Dendritic cell treated with granulocyte-macrophage colony-stimulating factor and Interleukin-4, amounts not matched to agents 40 ng/mL and 50 ng/mL, for 4 days (primary cell): ENCODE measurements at regions of chr19 and their contacts with region 1.

Region 1: DNA sequence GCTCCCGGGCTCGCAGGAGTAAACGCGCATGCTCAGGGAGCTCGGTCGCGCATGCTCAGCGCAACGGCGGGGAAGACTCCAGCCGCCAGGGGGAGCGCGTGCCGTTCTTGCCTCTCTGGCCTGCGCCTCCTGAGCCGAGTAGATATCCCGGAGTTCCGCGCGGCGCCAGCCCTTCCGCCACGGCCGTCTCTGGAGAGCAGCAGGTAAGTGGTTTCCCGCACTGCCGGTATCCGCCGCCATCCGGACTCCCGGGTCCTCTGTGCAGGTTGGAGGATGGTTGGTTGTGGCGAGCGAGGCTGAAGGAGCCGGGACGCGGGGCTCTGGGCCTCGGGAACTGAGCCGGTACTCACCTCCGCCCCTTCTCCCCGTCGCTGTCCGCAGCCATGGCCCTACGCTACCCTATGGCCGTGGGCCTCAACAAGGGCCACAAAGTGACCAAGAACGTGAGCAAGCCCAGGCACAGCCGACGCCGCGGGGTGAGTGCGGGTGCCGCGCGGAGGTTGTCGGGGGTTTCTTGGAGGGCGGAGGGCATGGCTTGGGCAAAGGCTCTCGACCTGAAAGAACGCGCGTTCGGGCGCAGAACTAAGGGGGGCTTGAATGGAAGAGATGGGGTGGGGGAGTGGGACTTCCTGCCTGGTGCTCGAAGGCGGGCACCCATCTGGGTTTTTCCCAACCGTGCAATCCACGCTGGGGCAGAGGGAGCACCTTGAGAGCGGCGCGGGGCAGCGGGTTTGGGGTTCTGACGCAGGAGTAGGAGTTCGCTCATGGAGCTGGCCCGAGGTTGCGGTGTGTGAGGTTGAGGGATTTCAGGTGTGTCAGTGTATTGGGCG is at the start of gene RPL36:
- H3K4me3 Mint-ChIP-seq: peak within 1 kb of the TSS; percentile 96
- H3K27ac Mint-ChIP-seq: peak within 1 kb of the TSS; percentile 98
- H3K4me1 Mint-ChIP-seq: peaks cover 54% of the 10 kb centered on the region
- H3K27me3 Mint-ChIP-seq: no peaks in the 10 kb centered on the region

Region 2: DNA sequence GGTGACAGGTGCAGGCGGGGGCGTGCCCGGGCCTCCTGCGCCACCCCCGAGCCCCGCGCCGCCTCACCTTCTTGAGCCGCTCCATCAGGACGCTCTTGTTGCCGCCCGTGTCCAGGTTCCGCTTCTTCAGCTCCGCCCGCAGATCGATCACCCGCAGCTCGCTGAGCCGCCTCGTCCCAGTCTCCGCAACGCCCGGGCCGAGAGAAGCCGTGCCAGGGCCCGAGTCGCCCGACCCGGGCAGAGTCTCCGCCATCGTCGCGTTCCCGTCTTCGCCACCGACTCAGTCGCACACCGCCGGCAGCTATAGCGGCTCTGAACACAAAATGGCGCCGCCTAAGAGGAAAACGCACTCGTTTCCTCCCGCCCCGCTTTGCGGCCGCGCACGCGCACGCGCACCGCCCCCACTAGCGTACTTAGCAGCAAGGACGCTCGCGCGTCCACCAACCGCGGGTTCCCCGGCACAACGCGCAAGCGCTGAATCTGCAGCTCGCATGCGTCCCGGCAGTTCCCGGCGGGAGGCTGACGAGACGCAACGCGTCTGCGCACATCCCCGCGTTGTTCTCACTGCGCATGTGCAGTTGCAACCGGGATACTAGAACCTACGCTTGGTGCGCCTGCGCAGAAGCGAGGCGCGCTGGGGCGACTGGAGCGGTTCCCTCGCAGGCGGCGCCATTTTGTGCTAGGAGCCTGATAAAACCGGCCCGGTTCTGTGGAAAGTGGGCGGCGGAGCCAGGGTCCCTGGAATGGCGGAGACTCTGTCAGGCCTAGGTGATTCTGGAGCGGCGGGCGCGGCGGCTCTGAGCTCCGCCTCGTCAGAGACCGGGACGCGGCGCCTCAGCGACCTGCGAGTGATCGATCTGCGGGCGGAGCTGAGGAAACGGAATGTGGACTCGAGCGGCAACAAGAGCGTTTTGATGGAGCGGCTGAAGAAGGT is 67.6 kb before region 1 on chr19 and contains the starts of genes SAFB and SAFB2:
- intact Hi-C with region 1: loop called (anchors 2 kb)
- H3K4me3 Mint-ChIP-seq: peak within 1 kb of the TSS; percentile 100
- H3K27ac Mint-ChIP-seq: peak within 1 kb of the TSS; percentile 100
- H3K4me1 Mint-ChIP-seq: peaks cover 61% of the 10 kb centered on the region
- H3K27me3 Mint-ChIP-seq: no peaks in the 10 kb centered on the region

Region 3: DNA sequence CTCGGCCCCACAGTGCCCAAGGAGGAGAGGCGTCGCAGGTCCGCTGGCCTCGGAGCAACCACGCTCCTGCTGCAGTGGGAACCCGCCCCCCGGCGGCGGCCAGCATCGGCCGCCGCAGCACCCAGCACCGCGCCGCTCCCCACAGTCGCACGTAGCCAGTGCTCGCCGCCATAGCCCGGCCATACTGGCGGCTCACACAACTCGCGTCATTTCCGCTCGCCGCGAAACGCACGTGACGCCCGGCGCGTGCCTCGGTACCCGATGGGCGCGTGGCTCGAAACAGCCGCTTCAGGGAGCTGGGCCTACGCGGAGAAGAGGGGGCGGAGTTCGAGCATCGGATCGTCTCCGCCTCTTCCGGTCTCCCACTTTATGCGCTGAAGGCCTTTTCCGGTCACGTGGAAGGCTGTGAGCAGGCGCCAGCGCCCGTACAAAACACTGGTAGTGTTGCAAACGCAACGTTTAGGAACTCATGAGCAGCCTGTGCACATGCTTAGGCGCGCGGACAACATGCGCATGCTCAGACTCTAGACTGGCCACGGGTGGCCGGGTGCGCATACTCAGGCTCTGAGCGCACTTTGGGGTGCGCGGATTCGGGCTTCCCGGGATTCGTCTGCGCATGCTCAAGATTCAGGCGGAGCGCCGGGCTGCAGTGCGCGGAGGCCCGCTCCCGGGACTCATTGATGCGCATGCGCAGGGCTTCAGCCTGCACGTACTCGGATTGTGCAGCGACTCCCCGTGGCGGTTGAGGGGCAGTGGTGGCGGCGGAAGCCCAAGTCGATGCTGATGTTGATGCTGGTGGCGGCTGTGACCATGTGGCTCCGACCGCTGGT is 29.8 kb after region 1 on chr19 and contains the starts of genes CATSPERD and LONP1:
- intact Hi-C with region 1: loop called (anchors 1 kb)
- H3K4me3 Mint-ChIP-seq: peak within 1 kb of the TSS; percentile 85
- H3K27ac Mint-ChIP-seq: peak within 1 kb of the TSS; percentile 93
- H3K4me1 Mint-ChIP-seq: peaks cover 29% of the 10 kb centered on the region
- H3K27me3 Mint-ChIP-seq: peaks cover 2% of the 10 kb centered on the region

Region 4: DNA sequence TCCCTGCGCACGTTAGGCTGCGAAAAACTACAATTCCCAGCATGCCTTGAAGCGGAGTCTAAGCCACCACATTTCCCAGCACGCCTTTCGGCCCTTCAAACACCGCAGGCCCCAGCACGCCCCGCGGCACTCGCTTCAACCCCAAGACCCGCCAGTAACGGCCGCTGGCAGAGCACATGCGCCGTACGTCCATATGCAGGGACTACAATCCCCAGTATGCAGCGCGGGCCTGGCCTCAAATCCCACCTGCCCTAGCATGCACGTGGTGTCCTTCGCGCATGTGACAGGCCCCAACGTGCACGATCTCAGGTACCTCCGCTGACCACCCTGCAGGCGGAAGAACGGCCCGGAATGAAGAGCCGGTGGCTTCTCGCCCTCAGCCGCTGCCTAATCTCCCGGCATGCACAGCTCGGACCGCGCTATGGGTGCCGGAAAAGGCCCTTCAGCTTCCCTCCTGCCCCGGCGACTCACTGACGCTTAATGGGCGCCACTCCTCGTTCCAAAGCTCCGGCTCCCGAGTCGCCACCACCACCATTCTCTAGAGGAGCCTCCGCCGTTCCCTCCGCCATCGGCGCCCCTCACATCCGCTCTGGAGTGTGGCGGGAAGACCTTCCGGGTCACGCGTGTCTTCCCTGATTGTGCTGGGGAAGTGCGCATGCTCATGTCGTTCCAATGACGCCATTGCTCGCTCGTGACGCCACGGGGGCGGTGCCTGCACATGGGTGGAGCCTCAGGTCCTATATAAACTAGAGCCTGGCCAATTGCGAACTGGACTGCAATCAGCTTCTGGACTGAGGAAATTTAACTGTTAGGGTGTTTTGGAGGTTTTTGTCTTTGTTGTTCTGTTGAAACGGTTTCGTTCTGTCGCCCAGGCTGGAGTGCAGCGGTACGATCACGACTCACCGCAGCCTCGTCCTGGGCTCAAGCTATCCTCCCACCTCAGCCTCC is 100.5 kb after region 1 on chr19 and contains the start of gene DUS3L:
- intact Hi-C with region 1: loop called (anchors 5 kb)
- H3K4me3 Mint-ChIP-seq: peak within 1 kb of the TSS; percentile 91
- H3K27ac Mint-ChIP-seq: peak within 1 kb of the TSS; percentile 99
- H3K4me1 Mint-ChIP-seq: peaks cover 23% of the 10 kb centered on the region
- H3K27me3 Mint-ChIP-seq: no peaks in the 10 kb centered on the region

Region 5: DNA sequence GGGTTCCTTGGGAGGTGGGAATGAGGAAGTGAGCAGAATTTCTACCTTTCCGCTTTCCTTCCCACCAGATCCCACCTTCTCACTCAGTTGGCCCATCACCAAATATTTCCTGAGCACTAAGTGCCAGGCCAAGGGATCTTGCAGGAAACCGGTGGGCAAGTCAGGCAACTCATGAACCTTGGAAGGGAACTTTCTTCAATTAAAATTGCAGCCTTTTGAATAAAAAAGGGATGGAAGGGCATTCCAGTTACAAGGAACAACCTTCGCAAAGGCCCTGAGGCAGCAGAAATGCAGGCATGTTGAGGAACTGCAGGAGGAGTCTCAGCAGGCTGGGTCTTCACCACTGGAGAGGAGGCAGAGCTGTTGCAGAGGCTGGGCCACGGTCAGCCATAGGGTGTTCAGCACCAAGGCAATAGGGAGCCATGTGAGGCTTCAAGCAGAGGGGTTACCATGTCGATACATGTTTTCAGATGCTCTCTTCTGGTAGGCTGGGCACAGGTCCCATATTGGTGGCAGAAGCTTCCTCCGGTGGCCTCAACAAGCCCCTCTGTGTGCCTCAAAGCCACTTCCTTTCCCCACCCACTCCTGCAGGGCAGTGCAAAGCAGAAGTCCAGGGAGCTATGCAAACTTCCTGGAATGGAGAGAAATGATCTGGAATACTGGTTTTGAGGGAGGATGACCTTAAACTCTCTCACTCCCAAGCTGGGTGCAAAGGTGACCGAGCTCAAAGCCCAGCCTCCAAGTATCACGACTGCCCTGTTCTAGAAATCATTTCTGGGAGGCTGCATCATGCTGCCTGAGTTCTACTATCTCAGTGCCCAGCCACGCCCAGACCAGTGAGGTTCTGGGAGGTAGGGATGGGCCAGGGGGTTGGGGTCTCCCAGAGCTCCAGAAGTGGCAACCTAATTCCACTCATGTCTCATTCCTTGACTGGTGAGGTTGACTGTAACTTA is 149.0 kb after region 1 on chr19 and contains the start of gene FUT6:
- intact Hi-C with region 1: no loop called
- H3K4me3 Mint-ChIP-seq: no peak within 1 kb of the TSS
- H3K27ac Mint-ChIP-seq: peak within 1 kb of the TSS; percentile 48
- H3K4me1 Mint-ChIP-seq: peaks cover 21% of the 10 kb centered on the region
- H3K27me3 Mint-ChIP-seq: peaks cover 11% of the 10 kb centered on the region